ENCODE measurements at regions of chr19 and their contacts with region 1.

Region 1: GRCh38 chr19:11073568-11073967 is 15.7 kb upstream of the LDLR start:
- DNase-seq: no peak
- H3K4me3 ChIP-seq: no peak overlapping the region
- H3K27ac ChIP-seq: no peak overlapping the region
- H3K4me1 ChIP-seq: no peaks in the 10 kb centered on the region
- H3K27me3 ChIP-seq: no peaks in the 10 kb centered on the region
- CTCF ChIP-seq: no peak

Region 2: GRCh38 chr19:11339254-11340098 is 265.9 kb after region 1 on chr19 and contains the start of gene RAB3D:
- CTCF ChIA-PET with region 1: no interaction called
- POLR2A ChIA-PET with region 1: no interaction called
- intact Hi-C with region 1: loop called (anchors 5 kb)
- DNase-seq: peak; percentile 95
- H3K4me3 ChIP-seq: peak within 1 kb of the TSS; percentile 78
- H3K27ac ChIP-seq: peak within 1 kb of the TSS; percentile 62
- H3K4me1 ChIP-seq: peaks cover 6% of the 10 kb centered on the region
- H3K27me3 ChIP-seq: no peaks in the 10 kb centered on the region
- CTCF ChIP-seq: no peak
- total RNA-seq, gene RAB3D: 25.4 and 35.5 TPM in 2 replicates